ENCODE measurements at regions of chr15 and their contacts with region 1.

Region 1: GRCh38 chr15:63172376-63173109 is 15.3 kb upstream of the RPS27L start:
- DNase-seq: no peak
- H3K4me3 Mint-ChIP-seq: no peak overlapping the region
- H3K27ac Mint-ChIP-seq: no peak overlapping the region
- H3K4me1 Mint-ChIP-seq: peaks cover 7% of the 10 kb centered on the region
- H3K27me3 Mint-ChIP-seq: no peaks in the 10 kb centered on the region

Region 2: GRCh38 chr15:63157118-63157843 is 15.3 kb before region 1 on chr15 and contains the start of gene RPS27L:
- intact Hi-C with region 1: loop called (anchors 1 kb)
- DNase-seq: peak; percentile 86
- H3K4me3 Mint-ChIP-seq: peak within 1 kb of the TSS; percentile 98
- H3K27ac Mint-ChIP-seq: peak within 1 kb of the TSS; percentile 98
- H3K4me1 Mint-ChIP-seq: peaks cover 21% of the 10 kb centered on the region
- H3K27me3 Mint-ChIP-seq: no peaks in the 10 kb centered on the region
- total RNA-seq, gene RPS27L: 163 and 164 TPM in 2 replicates

Region 3: GRCh38 chr15:63203451-63204090 is 31.0 kb after region 1 on chr15:
- intact Hi-C with region 1: loop called (anchors 1 kb)
- DNase-seq: no peak
- H3K4me3 Mint-ChIP-seq: no peak overlapping the region
- H3K27ac Mint-ChIP-seq: peak overlapping the region; percentile 2
- H3K4me1 Mint-ChIP-seq: peaks cover 77% of the 10 kb centered on the region
- H3K27me3 Mint-ChIP-seq: no peaks in the 10 kb centered on the region

Region 4: DNA sequence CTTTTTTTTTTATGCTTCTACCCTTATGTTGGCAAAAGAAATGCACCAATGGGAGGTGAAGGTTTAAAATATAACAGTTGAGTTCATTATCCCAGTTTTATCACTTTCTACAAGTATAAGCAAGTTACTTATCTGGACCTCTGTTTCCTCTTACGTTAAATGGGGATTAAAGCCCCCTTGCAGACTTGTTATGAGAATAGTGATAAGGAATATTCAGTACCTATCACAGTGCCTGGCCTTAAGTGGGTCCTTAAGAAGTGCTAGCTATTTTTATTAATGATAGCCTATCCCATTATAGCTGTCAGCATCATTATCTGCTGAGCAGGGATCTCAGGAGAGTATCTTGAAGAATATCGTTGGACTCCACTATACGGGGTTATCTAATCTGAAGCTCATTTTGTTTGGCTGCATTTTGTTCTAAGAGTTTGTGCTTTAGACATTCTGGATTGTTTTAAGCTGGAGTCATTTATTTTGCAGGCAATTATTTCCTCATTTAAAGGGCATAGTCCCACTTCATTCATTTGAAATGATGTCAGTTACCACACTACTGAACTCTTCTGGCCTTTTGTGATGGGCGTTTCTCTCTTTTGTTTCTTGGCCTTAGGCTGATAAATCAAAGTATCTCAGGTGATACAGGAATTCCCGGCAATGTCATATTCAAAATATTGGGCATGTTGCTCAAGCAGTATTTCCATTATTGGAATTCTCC is 45.7 kb after region 1 on chr15:
- intact Hi-C with region 1: no loop called
- DNase-seq: no peak
- H3K4me3 Mint-ChIP-seq: no peak overlapping the region
- H3K27ac Mint-ChIP-seq: no peak overlapping the region
- H3K4me1 Mint-ChIP-seq: peaks cover 58% of the 10 kb centered on the region
- H3K27me3 Mint-ChIP-seq: no peaks in the 10 kb centered on the region